ENCODE measurements at regions of chr13 and their contacts with region 1.

Region 1: GRCh38 chr13:77480066-77480465 is 55.4 kb upstream of the SCEL start:
- DNase-seq: no peak
- H3K4me3 Mint-ChIP-seq: no peak overlapping the region
- H3K27ac Mint-ChIP-seq: no peak overlapping the region
- H3K4me1 Mint-ChIP-seq: peaks cover 18% of the 10 kb centered on the region
- H3K27me3 Mint-ChIP-seq: no peaks in the 10 kb centered on the region

Region 2: GRCh38 chr13:77026818-77027585 is 453.1 kb before region 1 on chr13 and contains the start of gene FBXL3:
- CTCF ChIA-PET with region 1: interaction called, 5 read pairs
- POLR2A ChIA-PET with region 1: no interaction called
- intact Hi-C with region 1: loop called (anchors 1 kb)
- DNase-seq: peak; percentile 89
- H3K4me3 Mint-ChIP-seq: peak within 1 kb of the TSS; percentile 99
- H3K27ac Mint-ChIP-seq: peak within 1 kb of the TSS; percentile 96
- H3K4me1 Mint-ChIP-seq: peaks cover 41% of the 10 kb centered on the region
- H3K27me3 Mint-ChIP-seq: no peaks in the 10 kb centered on the region
- total RNA-seq, gene FBXL3: 35.6 to 35.7 TPM

Region 3: GRCh38 chr13:77040076-77040475 is 440.0 kb before region 1 on chr13:
- CTCF ChIA-PET with region 1: no interaction called
- POLR2A ChIA-PET with region 1: no interaction called
- intact Hi-C with region 1: no loop called
- DNase-seq: no peak
- H3K4me3 Mint-ChIP-seq: no peak overlapping the region
- H3K27ac Mint-ChIP-seq: no peak overlapping the region
- H3K4me1 Mint-ChIP-seq: no peaks in the 10 kb centered on the region
- H3K27me3 Mint-ChIP-seq: no peaks in the 10 kb centered on the region

Region 4: DNA sequence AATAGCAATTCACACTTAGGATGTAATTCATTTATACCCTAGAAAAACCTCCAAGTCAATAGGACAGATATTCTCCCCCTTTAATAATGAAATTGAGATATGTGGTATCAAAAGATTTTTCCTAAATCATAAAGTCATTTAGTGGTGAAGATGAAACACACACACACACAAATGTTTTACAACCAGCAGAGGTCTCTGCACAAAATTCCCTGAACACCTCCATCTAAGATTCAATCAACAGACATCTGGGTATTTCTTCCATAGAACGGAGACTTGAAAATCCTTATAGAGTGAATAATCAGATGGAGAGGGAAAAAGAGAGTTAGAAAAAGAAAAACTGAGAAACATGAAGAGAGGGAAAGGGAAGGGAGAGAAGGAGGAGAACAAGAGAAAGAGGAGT is 205.9 kb before region 1 on chr13:
- CTCF ChIA-PET with region 1: interaction called, 10 read pairs
- POLR2A ChIA-PET with region 1: no interaction called
- intact Hi-C with region 1: no loop called
- DNase-seq: no peak
- H3K4me3 Mint-ChIP-seq: no peak overlapping the region
- H3K27ac Mint-ChIP-seq: no peak overlapping the region
- H3K4me1 Mint-ChIP-seq: peaks cover 15% of the 10 kb centered on the region
- H3K27me3 Mint-ChIP-seq: no peaks in the 10 kb centered on the region

Region 5: GRCh38 chr13:77316430-77316829 is 163.6 kb before region 1 on chr13:
- CTCF ChIA-PET with region 1: interaction called, 13 read pairs
- POLR2A ChIA-PET with region 1: no interaction called
- intact Hi-C with region 1: no loop called
- DNase-seq: no peak
- H3K4me3 Mint-ChIP-seq: no peak overlapping the region
- H3K27ac Mint-ChIP-seq: no peak overlapping the region
- H3K4me1 Mint-ChIP-seq: peaks cover 80% of the 10 kb centered on the region
- H3K27me3 Mint-ChIP-seq: no peaks in the 10 kb centered on the region

Region 6: DNA sequence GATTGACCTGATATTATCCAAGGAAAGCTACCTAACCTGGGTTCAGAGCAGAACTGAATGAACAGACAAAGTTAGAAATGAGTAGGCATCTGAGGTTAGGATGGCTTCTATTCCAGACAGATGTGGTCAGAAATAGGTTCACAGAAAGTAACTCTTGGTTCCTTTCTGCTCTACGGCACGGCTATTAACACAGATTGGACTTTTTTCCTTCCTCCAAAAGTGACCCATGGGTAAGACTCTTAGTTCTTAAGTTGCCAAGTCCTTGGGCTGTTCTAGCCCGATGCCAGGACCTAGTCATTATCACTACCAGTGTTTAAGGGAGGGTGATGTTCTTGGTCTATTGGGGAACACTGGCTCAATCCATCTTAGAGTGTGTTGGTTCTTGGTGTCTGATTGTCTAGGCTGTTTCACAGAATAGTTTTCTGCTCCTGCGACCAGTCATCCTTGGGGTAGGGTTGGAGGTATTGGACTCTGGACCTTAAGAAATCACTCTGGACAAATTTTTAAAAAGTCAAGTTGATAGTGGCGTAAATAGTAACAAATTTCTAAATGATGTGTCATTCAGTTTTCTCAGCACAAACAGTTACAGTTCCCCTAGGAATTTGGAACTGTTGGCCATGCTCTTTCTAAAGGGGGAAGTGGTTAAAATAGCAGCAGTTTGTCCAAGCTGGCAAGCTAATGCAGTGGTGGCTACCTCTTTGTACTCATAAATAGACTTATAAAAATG is 93.0 kb before region 1 on chr13:
- CTCF ChIA-PET with region 1: interaction called, 8 read pairs
- POLR2A ChIA-PET with region 1: no interaction called
- intact Hi-C with region 1: loop called (anchors 1 kb)
- DNase-seq: no peak
- H3K4me3 Mint-ChIP-seq: no peak overlapping the region
- H3K27ac Mint-ChIP-seq: no peak overlapping the region
- H3K4me1 Mint-ChIP-seq: peaks cover 16% of the 10 kb centered on the region
- H3K27me3 Mint-ChIP-seq: peaks cover 1% of the 10 kb centered on the region

Region 7: GRCh38 chr13:77565635-77566034 is 85.6 kb after region 1 on chr13:
- CTCF ChIA-PET with region 1: interaction called, 12 read pairs
- POLR2A ChIA-PET with region 1: no interaction called
- intact Hi-C with region 1: no loop called
- DNase-seq: no peak
- H3K4me3 Mint-ChIP-seq: no peak overlapping the region
- H3K27ac Mint-ChIP-seq: no peak overlapping the region
- H3K4me1 Mint-ChIP-seq: no peaks in the 10 kb centered on the region
- H3K27me3 Mint-ChIP-seq: peaks cover 14% of the 10 kb centered on the region

Measured in activated CD4-positive, alpha-beta memory T cell treated with anti-CD3 and anti-CD28 coated beads for 36 hours (primary cell).